ENCODE measurements at regions of chr1 and their contacts with region 1.

Region 1: DNA sequence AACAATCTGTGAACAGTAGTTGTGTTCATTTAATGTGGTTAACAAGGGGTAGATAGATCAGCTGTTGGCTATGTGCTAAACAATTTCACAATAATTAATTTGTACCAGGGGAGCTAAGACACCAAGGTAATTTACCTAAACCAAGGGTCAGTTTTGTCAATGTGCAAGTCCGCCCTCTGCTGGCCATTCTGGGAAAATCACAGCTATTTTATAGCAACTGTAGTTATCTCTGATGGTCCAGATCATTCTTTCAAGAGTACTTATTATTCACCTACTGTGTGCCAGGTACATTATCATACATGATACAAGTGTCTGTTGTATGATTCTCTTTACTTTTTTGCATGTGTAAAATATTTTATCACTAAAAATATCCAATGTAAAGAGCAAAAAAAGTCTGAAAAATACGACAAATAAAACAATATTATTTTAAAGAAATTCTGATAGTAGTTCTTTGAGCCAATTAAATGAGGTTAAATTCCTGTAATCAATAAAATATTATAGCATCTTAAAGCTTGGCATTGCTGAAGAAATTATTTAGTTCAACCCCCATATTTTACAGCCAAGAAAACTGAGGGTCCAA is 312.3 kb upstream of the FAM78B start:
- DNase-seq: peak; percentile 21
- ATAC-seq: peak; percentile 67
- H3K4me3 ChIP-seq: no peak overlapping the region
- H3K27ac ChIP-seq: no peak overlapping the region
- H3K4me1 ChIP-seq: no peaks in the 10 kb centered on the region
- H3K27me3 ChIP-seq: peaks cover 18% of the 10 kb centered on the region
- CTCF ChIP-seq: peak; percentile 32 to 86 (median 56); a peak in 5 of 6 replicates
- POLR2A ChIP-seq: no peak
- RAD21 ChIP-seq: peak; percentile 57

Region 2: GRCh38 chr1:165851034-165851658 is 628.0 kb before region 1 on chr1:
- CTCF ChIA-PET with region 1: no interaction called
- POLR2A ChIA-PET with region 1: no interaction called
- RAD21 ChIA-PET with region 1: no interaction called
- intact Hi-C with region 1: no loop called
- DNase-seq: no peak
- ATAC-seq: no peak
- H3K4me3 ChIP-seq: no peak overlapping the region
- H3K27ac ChIP-seq: no peak overlapping the region
- H3K4me1 ChIP-seq: peaks cover 0 to 21% of the 10 kb centered on the region in 2 experiments; a peak in 2 of 4 replicates
- H3K27me3 ChIP-seq: no peaks in the 10 kb centered on the region
- CTCF ChIP-seq: no peak
- POLR2A ChIP-seq: no peak
- RAD21 ChIP-seq: no peak

Region 3: DNA sequence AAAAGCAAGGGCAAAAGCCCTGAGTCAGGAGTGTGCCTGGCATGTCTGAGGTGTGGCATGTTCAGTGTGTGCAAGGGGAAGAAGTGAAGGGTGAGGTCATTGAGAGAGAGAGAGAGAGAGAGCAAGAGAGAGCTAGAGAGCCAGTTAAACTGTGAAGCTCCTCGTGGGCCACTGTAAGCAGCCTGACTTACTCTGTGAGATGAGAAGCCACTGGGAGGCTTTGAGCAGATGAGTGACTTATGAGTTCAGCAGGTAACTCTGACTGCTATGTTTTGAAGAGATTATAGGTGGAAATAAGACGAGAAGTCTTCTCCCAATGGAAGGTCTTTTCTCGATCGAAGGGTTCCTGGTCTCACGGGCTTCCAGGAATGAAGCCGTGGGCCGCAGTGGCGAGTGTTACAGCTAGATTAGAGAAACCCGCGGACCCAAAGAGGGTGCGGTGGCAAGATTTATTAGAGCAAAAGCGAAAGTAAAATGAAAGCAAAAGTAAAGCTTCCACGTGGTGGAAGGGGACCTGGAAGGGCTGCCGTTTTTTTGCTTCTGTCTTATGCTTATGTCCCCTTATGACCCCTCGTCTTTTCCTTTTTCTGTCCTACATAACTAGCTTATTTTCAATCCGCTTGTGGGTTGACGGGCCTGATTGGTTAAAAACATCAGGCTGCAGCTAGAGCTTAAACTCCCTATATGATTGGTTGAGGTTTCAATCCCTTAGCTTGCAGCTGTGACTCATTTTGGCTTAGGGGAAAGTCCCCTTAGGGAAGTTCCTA is 10.7 kb after region 1 on chr1:
- CTCF ChIA-PET with region 1: interaction called, 37 read pairs
- POLR2A ChIA-PET with region 1: interaction called, 3 read pairs
- RAD21 ChIA-PET with region 1: no interaction called
- intact Hi-C with region 1: no loop called
- DNase-seq: peak; percentile 49
- ATAC-seq: peak; percentile 80
- H3K4me3 ChIP-seq: peak overlapping the region; percentile 36 to 59
- H3K27ac ChIP-seq: no peak overlapping the region
- H3K4me1 ChIP-seq: peaks cover 4 to 14% of the 10 kb centered on the region in 2 experiments; a peak in 3 of 4 replicates
- H3K27me3 ChIP-seq: no peaks in the 10 kb centered on the region
- CTCF ChIP-seq: no peak
- POLR2A ChIP-seq: no peak
- RAD21 ChIP-seq: no peak

Region 4: GRCh38 chr1:166865931-166866330 is 386.8 kb after region 1 on chr1:
- CTCF ChIA-PET with region 1: no interaction called
- POLR2A ChIA-PET with region 1: no interaction called
- RAD21 ChIA-PET with region 1: no interaction called
- intact Hi-C with region 1: no loop called
- DNase-seq: no peak
- ATAC-seq: no peak
- H3K4me3 ChIP-seq: no peak overlapping the region
- H3K27ac ChIP-seq: no peak overlapping the region
- H3K4me1 ChIP-seq: no peaks in the 10 kb centered on the region
- H3K27me3 ChIP-seq: no peaks in the 10 kb centered on the region
- CTCF ChIP-seq: no peak
- POLR2A ChIP-seq: no peak
- RAD21 ChIP-seq: no peak

Region 5: DNA sequence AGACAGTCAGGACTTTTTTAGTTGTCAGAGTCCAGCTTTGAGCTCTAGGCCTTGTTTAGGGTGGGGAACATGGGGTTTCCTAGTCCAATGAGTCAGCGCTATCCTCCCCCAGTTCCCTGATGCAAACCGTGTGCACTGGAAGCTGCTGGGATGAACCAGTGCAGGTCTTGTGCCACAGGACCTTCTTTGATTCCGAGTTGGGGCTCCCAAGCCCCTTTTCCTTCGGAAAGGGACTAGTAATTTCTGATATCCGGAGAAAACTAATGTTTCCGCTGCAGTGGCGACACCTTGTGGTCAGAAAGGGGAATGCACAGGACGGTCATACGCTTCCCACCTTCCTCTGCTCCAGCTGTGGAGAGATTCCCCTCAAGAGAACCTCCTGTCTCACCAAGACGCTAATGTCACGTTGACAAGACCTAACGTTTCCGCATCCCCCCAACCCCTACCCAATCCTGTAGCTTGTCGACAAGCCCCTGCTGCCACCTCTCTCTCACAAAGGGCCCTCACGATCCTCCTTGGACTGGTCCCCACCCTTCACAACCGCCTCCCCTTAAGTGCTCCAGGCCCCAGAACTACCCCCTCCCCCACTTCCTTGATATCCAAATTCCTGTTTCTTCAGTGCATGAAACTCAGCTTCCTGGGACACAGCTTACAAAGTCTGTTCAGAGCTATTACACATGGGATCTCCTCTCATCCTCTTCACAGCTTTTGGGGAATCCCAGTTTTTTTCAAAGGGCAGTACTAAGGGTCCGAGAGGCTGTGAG is 580.1 kb after region 1 on chr1:
- CTCF ChIA-PET with region 1: interaction called, 8 read pairs
- POLR2A ChIA-PET with region 1: no interaction called
- RAD21 ChIA-PET with region 1: no interaction called
- intact Hi-C with region 1: loop called (anchors 5 kb)
- DNase-seq: peak; percentile 52
- ATAC-seq: peak; percentile 76
- H3K4me3 ChIP-seq: peak overlapping the region; percentile 31 to 32
- H3K27ac ChIP-seq: peak overlapping the region; percentile 10
- H3K4me1 ChIP-seq: peaks cover 3 to 22% of the 10 kb centered on the region in 2 experiments; a peak in 3 of 4 replicates
- H3K27me3 ChIP-seq: no peaks in the 10 kb centered on the region
- CTCF ChIP-seq: peak; percentile 75 to 95 (median 88); a peak in 5 of 6 replicates
- POLR2A ChIP-seq: no peak
- RAD21 ChIP-seq: peak; percentile 92